K562 (cell line): ENCODE measurements at regions of chr22 and their contacts with region 1.

Region 1: DNA sequence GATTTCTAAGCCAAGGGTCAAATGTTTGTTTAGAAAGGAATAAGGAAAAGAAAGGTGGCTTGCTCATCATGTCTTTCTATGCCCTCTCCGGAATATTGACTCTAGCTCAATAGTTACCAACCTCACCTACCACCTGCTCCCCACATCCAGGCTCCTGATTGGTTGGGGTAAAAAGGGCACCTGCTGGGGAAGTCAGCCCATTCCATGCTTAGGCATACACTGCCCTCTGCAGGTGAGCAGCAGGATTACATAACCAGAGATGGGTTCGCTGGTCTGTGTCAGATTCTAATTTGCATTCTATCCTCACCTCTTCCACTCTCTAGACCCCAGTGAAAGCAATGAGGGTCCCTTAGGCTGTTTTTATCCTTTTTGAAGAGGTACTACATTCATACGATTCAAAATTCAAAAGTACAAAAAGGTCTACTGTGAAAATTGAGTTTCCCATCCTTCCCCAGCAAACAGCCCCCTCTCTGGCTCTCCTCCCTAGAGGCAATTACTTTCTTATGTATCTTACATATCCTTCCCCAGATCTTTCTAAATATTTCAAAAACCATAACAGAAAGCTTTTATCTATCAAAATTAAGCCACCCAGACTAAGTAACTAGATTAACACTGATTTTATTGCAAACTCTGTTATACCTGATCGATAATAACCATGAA is 98.0 kb upstream of the ASPHD2 start:
- DNase-seq: peak; percentile 62 to 88 (median 84)
- ATAC-seq: peak; percentile 91
- H3K4me3 ChIP-seq: no peak overlapping the region
- H3K27ac ChIP-seq: no peak overlapping the region
- H3K4me1 ChIP-seq: no peaks in the 10 kb centered on the region; a peak in 2 of 5 replicates
- H3K27me3 ChIP-seq: peaks cover 0 to 15% of the 10 kb centered on the region in 2 experiments; a peak in 2 of 5 replicates
- CTCF ChIP-seq: peak; percentile 84 to 88 (median 85)
- EP300 ChIP-seq: no peak
- POLR2A ChIP-seq: no peak
- RAD21 ChIP-seq: peak; percentile 62 to 90

Region 2: GRCh38 chr22:25202290-25202921 is 1128.7 kb before region 1 on chr22:
- CTCF ChIA-PET with region 1: no interaction called
- POLR2A ChIA-PET with region 1: no interaction called
- in situ Hi-C with region 1: loop called (anchors 25 kb)
- intact Hi-C with region 1: no loop called
- DNase-seq: peak; percentile 57 to 62 (median 61)
- ATAC-seq: peak; percentile 86
- H3K4me3 ChIP-seq: no peak overlapping the region
- H3K27ac ChIP-seq: no peak overlapping the region
- H3K4me1 ChIP-seq: no peaks in the 10 kb centered on the region; a peak in 1 of 5 replicates
- H3K27me3 ChIP-seq: peaks cover 4 to 19% of the 10 kb centered on the region in 2 experiments; a peak in 2 of 5 replicates
- CTCF ChIP-seq: peak; percentile 70 to 75 (median 73)
- EP300 ChIP-seq: no peak
- POLR2A ChIP-seq: no peak
- RAD21 ChIP-seq: peak; percentile 26 to 70

Region 3: GRCh38 chr22:25447686-25448434 is 883.2 kb before region 1 on chr22:
- CTCF ChIA-PET with region 1: no interaction called
- POLR2A ChIA-PET with region 1: no interaction called
- in situ Hi-C with region 1: loop called (anchors 10 kb)
- intact Hi-C with region 1: no loop called
- DNase-seq: peak; percentile 90 to 95 (median 93)
- ATAC-seq: peak; percentile 90
- H3K4me3 ChIP-seq: peak overlapping the region; percentile 73
- H3K27ac ChIP-seq: peak overlapping the region; percentile 68
- H3K4me1 ChIP-seq: peaks cover 0 to 10% of the 10 kb centered on the region in 2 experiments; a peak in 3 of 5 replicates
- H3K27me3 ChIP-seq: no peaks in the 10 kb centered on the region
- CTCF ChIP-seq: peak; percentile 79 to 90 (median 86)
- EP300 ChIP-seq: no peak
- POLR2A ChIP-seq: peak; percentile 69
- RAD21 ChIP-seq: peak; percentile 30; a peak in 2 of 4 replicates

Region 4: DNA sequence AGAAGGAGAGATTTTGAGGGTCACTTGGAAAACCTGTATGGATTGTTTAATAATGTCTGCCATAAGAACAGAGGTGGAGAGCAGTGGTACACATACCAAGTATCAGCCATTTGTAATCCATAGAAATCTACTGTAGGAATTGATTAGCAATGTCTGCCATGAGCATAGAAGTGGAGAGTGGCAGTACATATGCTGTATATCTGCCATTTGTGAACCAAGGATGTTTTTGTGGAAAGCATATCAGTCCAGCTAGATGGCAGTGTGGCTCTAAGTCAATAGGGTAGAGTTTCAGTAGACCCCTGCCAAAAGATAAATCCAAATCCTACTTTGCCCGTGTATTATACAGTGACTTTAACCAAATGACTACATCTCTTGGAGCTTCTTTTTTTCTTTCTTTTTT is 244.7 kb before region 1 on chr22:
- CTCF ChIA-PET with region 1: no interaction called
- POLR2A ChIA-PET with region 1: no interaction called
- in situ Hi-C with region 1: no loop called
- intact Hi-C with region 1: loop called (anchors 10 kb)
- DNase-seq: peak in 1 of 4 experiments; percentile 3
- ATAC-seq: no peak
- H3K4me3 ChIP-seq: no peak overlapping the region
- H3K27ac ChIP-seq: no peak overlapping the region
- H3K4me1 ChIP-seq: no peaks in the 10 kb centered on the region
- H3K27me3 ChIP-seq: no peaks in the 10 kb centered on the region
- CTCF ChIP-seq: no peak; a peak in 1 of 6 replicates
- EP300 ChIP-seq: no peak
- POLR2A ChIP-seq: no peak
- RAD21 ChIP-seq: peak in 1 of 2 experiments; percentile 25; a peak in 2 of 4 replicates

Region 5: DNA sequence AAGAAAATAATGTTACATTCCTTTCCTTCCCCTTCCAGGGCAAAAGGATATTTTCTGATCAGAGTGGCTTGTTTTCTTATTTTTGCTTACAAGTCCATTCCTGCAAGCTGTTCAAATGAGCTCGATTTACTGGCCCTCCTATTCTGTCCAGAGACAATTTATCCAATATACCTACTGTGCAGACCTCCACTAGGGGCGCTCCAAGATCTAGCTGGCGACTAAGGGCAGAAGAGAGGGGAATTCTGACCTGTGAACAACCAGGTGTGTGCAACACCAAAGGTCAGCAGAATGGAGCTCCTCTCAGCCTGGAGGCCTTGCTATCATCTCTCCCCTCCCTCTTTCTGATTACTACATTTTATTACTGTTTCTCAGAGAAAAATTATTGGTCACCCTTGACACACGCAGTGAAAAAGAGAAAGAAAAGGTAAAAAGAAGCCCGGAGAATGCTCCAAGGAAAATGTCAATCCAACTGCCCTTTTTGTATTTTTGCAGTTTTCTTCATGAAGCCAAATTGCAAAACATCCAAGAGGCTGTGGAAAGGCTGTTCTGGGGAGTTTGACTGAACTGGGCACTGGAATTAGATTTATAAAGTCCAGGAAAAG is 158.6 kb before region 1 on chr22:
- CTCF ChIA-PET with region 1: interaction called, 6 read pairs
- POLR2A ChIA-PET with region 1: no interaction called
- in situ Hi-C with region 1: no loop called
- intact Hi-C with region 1: loop called (anchors 10 kb)
- DNase-seq: peak; percentile 39 to 48 (median 43)
- ATAC-seq: peak; percentile 82
- H3K4me3 ChIP-seq: no peak overlapping the region
- H3K27ac ChIP-seq: no peak overlapping the region
- H3K4me1 ChIP-seq: peaks cover 0 to 5% of the 10 kb centered on the region in 2 experiments; a peak in 2 of 5 replicates
- H3K27me3 ChIP-seq: peaks cover 0 to 24% of the 10 kb centered on the region in 2 experiments; a peak in 2 of 5 replicates
- CTCF ChIP-seq: peak; percentile 43 to 67 (median 62)
- EP300 ChIP-seq: no peak
- POLR2A ChIP-seq: no peak
- RAD21 ChIP-seq: peak in 1 of 2 experiments; percentile 40; a peak in 2 of 4 replicates

Region 6: GRCh38 chr22:26445577-26446275 is 114.6 kb after region 1 on chr22:
- CTCF ChIA-PET with region 1: no interaction called
- POLR2A ChIA-PET with region 1: no interaction called
- in situ Hi-C with region 1: no loop called
- intact Hi-C with region 1: no loop called
- DNase-seq: no peak
- ATAC-seq: no peak
- H3K4me3 ChIP-seq: no peak overlapping the region
- H3K27ac ChIP-seq: no peak overlapping the region
- H3K4me1 ChIP-seq: peaks cover 0 to 3% of the 10 kb centered on the region in 2 experiments; a peak in 3 of 5 replicates
- H3K27me3 ChIP-seq: no peaks in the 10 kb centered on the region
- CTCF ChIP-seq: no peak
- EP300 ChIP-seq: no peak
- POLR2A ChIP-seq: no peak
- RAD21 ChIP-seq: no peak

Region 7: GRCh38 chr22:26461188-26461810 is 130.2 kb after region 1 on chr22:
- CTCF ChIA-PET with region 1: no interaction called
- POLR2A ChIA-PET with region 1: no interaction called
- in situ Hi-C with region 1: no loop called
- intact Hi-C with region 1: no loop called
- DNase-seq: peak; percentile 51 to 55 (median 52)
- ATAC-seq: peak; percentile 89
- H3K4me3 ChIP-seq: no peak overlapping the region
- H3K27ac ChIP-seq: no peak overlapping the region
- H3K4me1 ChIP-seq: peaks cover 0 to 5% of the 10 kb centered on the region in 2 experiments; a peak in 3 of 5 replicates
- H3K27me3 ChIP-seq: no peaks in the 10 kb centered on the region
- CTCF ChIP-seq: peak; percentile 70 to 79 (median 77)
- EP300 ChIP-seq: no peak
- POLR2A ChIP-seq: no peak
- RAD21 ChIP-seq: peak; percentile 65 to 85